ENCODE measurements at regions of chr4 and their contacts with region 1.

Region 1: DNA sequence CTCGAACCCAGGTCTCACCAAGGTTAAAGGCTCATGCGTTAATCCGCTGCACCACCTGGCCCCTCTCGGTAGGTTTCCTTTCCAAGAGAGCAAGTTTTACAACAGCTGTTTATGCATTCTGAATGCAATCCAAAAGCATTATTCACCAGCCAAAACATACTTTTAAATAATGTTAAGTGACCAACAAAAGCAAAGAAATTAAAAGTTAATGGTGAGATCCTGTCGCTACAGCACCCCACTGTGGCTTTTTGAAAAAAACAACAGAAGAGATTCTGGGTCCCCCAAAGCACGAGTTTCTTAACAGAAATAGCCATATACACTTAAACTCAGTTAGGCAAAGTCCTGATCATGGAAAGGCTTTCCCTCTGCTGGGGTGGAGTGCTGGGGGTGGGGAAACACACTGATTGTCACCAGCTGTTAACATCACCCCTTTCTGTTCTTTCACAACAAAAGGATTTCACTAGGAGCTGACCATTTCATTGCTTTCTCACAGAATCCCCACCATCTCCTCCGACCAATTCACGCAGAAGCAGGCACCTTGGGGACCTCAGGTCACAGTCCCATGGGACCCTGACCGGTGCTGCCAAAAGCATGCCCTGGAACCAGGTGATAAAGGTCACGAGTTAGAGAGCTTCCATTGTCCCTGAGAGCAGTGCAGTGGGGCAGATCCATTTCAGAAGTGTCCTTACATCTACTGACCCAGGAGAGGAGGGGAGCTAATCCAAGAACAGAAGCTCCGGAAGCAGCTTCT is 51.2 kb downstream of the ZNF827 start:
- DNase-seq: peak; percentile 75
- ATAC-seq: peak; percentile 82
- H3K4me3 ChIP-seq: no peak overlapping the region
- H3K27ac ChIP-seq: peak overlapping the region; percentile 56; the same call in 1 of the 2 replicates
- H3K4me1 ChIP-seq: peaks cover 6% of the 10 kb centered on the region
- H3K27me3 ChIP-seq: no peaks in the 10 kb centered on the region
- CTCF ChIP-seq: peak; percentile 36
- POLR2A ChIP-seq: no peak
- RAD21 ChIP-seq: peak; percentile 45

Region 2: GRCh38 chr4:145216535-145216934 is 670.9 kb before region 1 on chr4:
- CTCF ChIA-PET with region 1: interaction called, 5 read pairs
- POLR2A ChIA-PET with region 1: no interaction called
- dilution Hi-C with region 1: no loop called
- in situ Hi-C with region 1: no loop called
- intact Hi-C with region 1: loop called (anchors 5 kb)
- DNase-seq: peak; percentile 44
- ATAC-seq: no peak
- H3K4me3 ChIP-seq: no peak overlapping the region
- H3K27ac ChIP-seq: no peak overlapping the region
- H3K4me1 ChIP-seq: no peaks in the 10 kb centered on the region
- H3K27me3 ChIP-seq: peaks cover 3% of the 10 kb centered on the region; the same call in 1 of the 2 replicates
- CTCF ChIP-seq: peak; percentile 79
- POLR2A ChIP-seq: no peak
- RAD21 ChIP-seq: peak; percentile 84

Region 3: GRCh38 chr4:146059865-146060264 is 172.4 kb after region 1 on chr4:
- CTCF ChIA-PET with region 1: no interaction called
- POLR2A ChIA-PET with region 1: no interaction called
- dilution Hi-C with region 1: no loop called
- in situ Hi-C with region 1: no loop called
- intact Hi-C with region 1: loop called (anchors 10 kb)
- DNase-seq: no peak
- ATAC-seq: no peak
- H3K4me3 ChIP-seq: no peak overlapping the region
- H3K27ac ChIP-seq: no peak overlapping the region
- H3K4me1 ChIP-seq: peaks cover under 1% of the 10 kb centered on the region; the same call in 1 of the 2 replicates
- H3K27me3 ChIP-seq: peaks cover 3% of the 10 kb centered on the region; the same call in 1 of the 2 replicates
- CTCF ChIP-seq: no peak
- POLR2A ChIP-seq: no peak
- RAD21 ChIP-seq: no peak

Region 4: DNA sequence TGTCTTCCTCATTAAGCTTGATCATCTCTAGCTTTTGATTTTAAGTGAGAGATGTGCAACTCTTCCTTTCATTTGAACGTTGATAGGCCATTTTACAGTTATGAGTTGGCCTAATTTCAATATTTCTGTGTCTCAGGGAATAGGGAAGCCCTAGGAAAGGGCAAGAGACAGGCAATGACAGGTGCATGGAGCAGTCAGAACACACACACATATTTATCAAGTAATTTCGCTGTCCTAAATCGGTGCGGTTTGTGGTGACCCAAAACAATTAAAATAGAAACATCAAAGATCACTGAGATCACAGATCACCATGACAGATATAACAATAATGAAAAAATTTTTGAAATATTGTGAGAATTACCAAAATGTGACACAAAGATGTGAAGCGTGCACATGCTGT is 200.4 kb after region 1 on chr4:
- CTCF ChIA-PET with region 1: no interaction called
- POLR2A ChIA-PET with region 1: no interaction called
- dilution Hi-C with region 1: no loop called
- in situ Hi-C with region 1: no loop called
- intact Hi-C with region 1: no loop called
- DNase-seq: no peak
- ATAC-seq: no peak
- H3K4me3 ChIP-seq: no peak overlapping the region
- H3K27ac ChIP-seq: no peak overlapping the region
- H3K4me1 ChIP-seq: no peaks in the 10 kb centered on the region
- H3K27me3 ChIP-seq: no peaks in the 10 kb centered on the region; the same call in 1 of the 2 replicates
- CTCF ChIP-seq: no peak
- POLR2A ChIP-seq: no peak
- RAD21 ChIP-seq: no peak